IMR-90 (cell line): ENCODE measurements at regions of chr3 and their contacts with region 1.

Region 1: GRCh38 chr3:22117751-22118346 is 366.8 kb upstream of the ZNF385D start:
- DNase-seq: peak; percentile 62
- ATAC-seq: no peak
- H3K4me3 ChIP-seq: no peak overlapping the region
- H3K27ac ChIP-seq: no peak overlapping the region
- H3K4me1 ChIP-seq: no peaks in the 10 kb centered on the region
- H3K27me3 ChIP-seq: no peaks in the 10 kb centered on the region
- CTCF ChIP-seq: peak; percentile 72
- POLR2A ChIP-seq: no peak
- RAD21 ChIP-seq: peak; percentile 77

Region 2: DNA sequence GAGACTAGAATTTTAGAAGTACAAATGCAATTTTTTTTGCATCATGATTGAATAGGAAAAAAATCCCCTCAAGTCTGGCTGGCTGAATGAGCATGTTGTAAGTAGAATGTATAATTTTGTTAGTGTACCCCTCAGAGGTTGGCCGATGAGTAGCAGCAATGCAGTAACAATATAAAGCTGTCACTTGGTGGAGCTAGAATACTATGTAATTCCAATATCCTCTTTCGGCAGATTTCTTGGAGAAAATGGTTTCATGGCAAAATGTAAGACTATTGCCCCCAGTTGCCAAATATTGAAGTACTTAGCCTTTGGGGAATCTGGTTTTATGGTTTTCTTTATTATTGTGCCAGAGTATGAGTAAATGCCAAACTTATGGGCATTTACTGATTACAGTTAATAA is 1892.1 kb before region 1 on chr3:
- CTCF ChIA-PET with region 1: no interaction called
- POLR2A ChIA-PET with region 1: no interaction called
- dilution Hi-C with region 1: no loop called
- in situ Hi-C with region 1: no loop called
- intact Hi-C with region 1: loop called (anchors 2 kb)
- DNase-seq: peak; percentile 3
- ATAC-seq: no peak; the same call in 1 of the 2 replicates
- H3K4me3 ChIP-seq: no peak overlapping the region
- H3K27ac ChIP-seq: no peak overlapping the region
- H3K4me1 ChIP-seq: no peaks in the 10 kb centered on the region
- H3K27me3 ChIP-seq: no peaks in the 10 kb centered on the region
- CTCF ChIP-seq: 0 out of 2 replicates have a peak, but pooled peaks have one; percentile 27
- POLR2A ChIP-seq: no peak
- RAD21 ChIP-seq: peak; percentile 35

Region 3: GRCh38 chr3:20340324-20340928 is 1777.4 kb before region 1 on chr3:
- CTCF ChIA-PET with region 1: no interaction called
- POLR2A ChIA-PET with region 1: no interaction called
- dilution Hi-C with region 1: no loop called
- in situ Hi-C with region 1: loop called (anchors 25 kb)
- intact Hi-C with region 1: loop called (anchors 1 kb)
- DNase-seq: peak; percentile 50
- ATAC-seq: peak; percentile 87
- H3K4me3 ChIP-seq: no peak overlapping the region
- H3K27ac ChIP-seq: no peak overlapping the region
- H3K4me1 ChIP-seq: no peaks in the 10 kb centered on the region
- H3K27me3 ChIP-seq: no peaks in the 10 kb centered on the region
- CTCF ChIP-seq: peak; percentile 85
- POLR2A ChIP-seq: no peak
- RAD21 ChIP-seq: peak; percentile 81

Region 4: DNA sequence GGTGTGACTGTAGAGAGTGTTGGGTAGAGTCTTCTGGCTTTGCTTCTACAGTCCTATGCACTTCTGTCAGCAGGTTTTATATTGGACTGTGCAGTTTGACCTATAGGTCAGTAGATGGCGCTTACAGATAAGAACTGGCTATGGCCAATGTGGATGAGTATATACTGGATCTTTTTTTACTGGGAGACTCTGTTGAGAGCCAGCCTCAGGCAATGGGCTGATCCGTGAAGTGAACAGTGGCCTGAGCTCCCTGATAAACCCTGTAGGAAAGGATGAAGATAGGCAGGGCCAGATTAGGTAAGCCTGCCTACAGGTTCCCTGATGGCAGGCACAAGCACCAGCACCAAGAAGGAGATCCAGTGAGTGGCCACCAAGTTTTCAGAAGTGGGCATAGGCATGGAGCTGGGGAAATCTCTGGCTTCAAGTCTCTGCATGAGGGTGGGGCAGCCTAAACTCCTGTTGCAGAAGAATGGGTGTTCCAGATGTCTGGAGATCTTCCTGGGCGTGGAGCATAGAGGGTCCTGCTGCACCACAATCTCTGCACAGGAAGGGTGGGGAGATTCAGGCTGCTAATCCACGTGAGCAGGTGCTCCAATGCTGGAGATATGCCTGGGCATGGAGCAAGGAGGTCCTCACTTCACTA is 1605.9 kb before region 1 on chr3:
- CTCF ChIA-PET with region 1: no interaction called
- POLR2A ChIA-PET with region 1: no interaction called
- dilution Hi-C with region 1: no loop called
- in situ Hi-C with region 1: loop called (anchors 25 kb)
- intact Hi-C with region 1: loop called (anchors 2 kb)
- DNase-seq: peak; percentile 58
- ATAC-seq: peak; percentile 99
- H3K4me3 ChIP-seq: no peak overlapping the region
- H3K27ac ChIP-seq: no peak overlapping the region
- H3K4me1 ChIP-seq: no peaks in the 10 kb centered on the region
- H3K27me3 ChIP-seq: no peaks in the 10 kb centered on the region
- CTCF ChIP-seq: peak; percentile 83
- POLR2A ChIP-seq: no peak
- RAD21 ChIP-seq: peak; percentile 93

Region 5: GRCh38 chr3:21484057-21484827 is 633.6 kb before region 1 on chr3:
- CTCF ChIA-PET with region 1: no interaction called
- POLR2A ChIA-PET with region 1: no interaction called
- dilution Hi-C with region 1: no loop called
- in situ Hi-C with region 1: no loop called
- intact Hi-C with region 1: loop called (anchors 10 kb)
- DNase-seq: peak; percentile 62
- ATAC-seq: peak; percentile 92
- H3K4me3 ChIP-seq: no peak overlapping the region
- H3K27ac ChIP-seq: no peak overlapping the region
- H3K4me1 ChIP-seq: no peaks in the 10 kb centered on the region
- H3K27me3 ChIP-seq: no peaks in the 10 kb centered on the region
- CTCF ChIP-seq: peak; percentile 56
- POLR2A ChIP-seq: no peak
- RAD21 ChIP-seq: peak; percentile 71

Region 6: GRCh38 chr3:21752749-21753347 is 365.0 kb before region 1 on chr3:
- CTCF ChIA-PET with region 1: no interaction called
- POLR2A ChIA-PET with region 1: no interaction called
- dilution Hi-C with region 1: no loop called
- in situ Hi-C with region 1: no loop called
- intact Hi-C with region 1: loop called (anchors 2 kb)
- DNase-seq: peak; percentile 49
- ATAC-seq: peak; percentile 35; the same call in 1 of the 2 replicates
- H3K4me3 ChIP-seq: no peak overlapping the region
- H3K27ac ChIP-seq: no peak overlapping the region
- H3K4me1 ChIP-seq: no peaks in the 10 kb centered on the region
- H3K27me3 ChIP-seq: no peaks in the 10 kb centered on the region; the same call in 1 of the 2 replicates
- CTCF ChIP-seq: peak; percentile 52
- POLR2A ChIP-seq: no peak
- RAD21 ChIP-seq: peak; percentile 45

Region 7: DNA sequence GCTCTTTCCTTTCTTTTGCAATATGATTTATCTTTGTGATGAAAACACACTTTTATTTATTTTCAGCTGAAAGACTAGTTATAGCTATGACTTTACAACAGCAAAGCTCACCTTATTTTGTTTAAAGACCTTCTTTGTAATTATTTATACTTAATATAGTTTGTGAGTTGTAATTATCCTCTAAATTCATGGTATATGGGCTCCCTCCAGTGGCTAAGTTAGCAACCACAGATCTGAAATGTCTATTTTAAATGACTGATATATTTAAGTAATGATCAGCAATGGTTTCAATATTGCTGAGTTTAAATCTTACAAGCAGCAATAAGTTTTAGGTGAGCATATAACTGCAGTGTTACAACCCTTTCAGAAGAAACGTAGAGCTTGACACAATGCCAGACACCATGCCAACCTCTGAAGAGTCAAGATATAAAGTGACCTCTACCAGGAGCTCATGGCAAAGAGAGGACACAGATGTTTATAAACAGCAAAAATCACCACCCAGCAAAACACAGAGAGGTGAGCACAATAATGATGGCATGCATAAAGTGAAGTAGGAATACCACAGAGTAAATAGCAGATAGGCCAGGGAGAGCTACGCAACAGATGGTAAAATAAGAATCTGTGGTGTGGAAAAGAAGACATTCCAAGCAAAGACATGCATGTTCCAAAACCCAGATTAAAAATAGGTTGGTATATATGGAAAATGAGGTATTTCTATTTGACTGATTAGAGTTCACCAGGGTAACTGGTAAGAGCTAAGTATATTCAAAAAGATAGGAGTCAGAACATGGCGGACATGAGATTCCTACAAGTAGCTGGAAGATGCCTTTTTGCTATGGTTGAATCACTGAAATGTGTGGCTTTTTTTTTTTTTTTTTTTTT is 223.1 kb before region 1 on chr3:
- CTCF ChIA-PET with region 1: no interaction called
- POLR2A ChIA-PET with region 1: no interaction called
- dilution Hi-C with region 1: no loop called
- in situ Hi-C with region 1: no loop called
- intact Hi-C with region 1: loop called (anchors 5 kb)
- DNase-seq: peak; percentile 35
- ATAC-seq: peak; percentile 66; the same call in 1 of the 2 replicates
- H3K4me3 ChIP-seq: no peak overlapping the region
- H3K27ac ChIP-seq: no peak overlapping the region
- H3K4me1 ChIP-seq: no peaks in the 10 kb centered on the region
- H3K27me3 ChIP-seq: no peaks in the 10 kb centered on the region
- CTCF ChIP-seq: peak; percentile 65
- POLR2A ChIP-seq: no peak
- RAD21 ChIP-seq: peak; percentile 74

Region 8: GRCh38 chr3:22101811-22102210 is 16.0 kb before region 1 on chr3:
- CTCF ChIA-PET with region 1: no interaction called
- POLR2A ChIA-PET with region 1: no interaction called
- dilution Hi-C with region 1: no loop called
- in situ Hi-C with region 1: no loop called
- intact Hi-C with region 1: no loop called
- DNase-seq: no peak
- ATAC-seq: no peak
- H3K4me3 ChIP-seq: no peak overlapping the region
- H3K27ac ChIP-seq: no peak overlapping the region
- H3K4me1 ChIP-seq: no peaks in the 10 kb centered on the region
- H3K27me3 ChIP-seq: no peaks in the 10 kb centered on the region
- CTCF ChIP-seq: no peak
- POLR2A ChIP-seq: no peak
- RAD21 ChIP-seq: no peak